ENCODE measurements at regions of chr14 and their contacts with region 1.

Region 1: DNA sequence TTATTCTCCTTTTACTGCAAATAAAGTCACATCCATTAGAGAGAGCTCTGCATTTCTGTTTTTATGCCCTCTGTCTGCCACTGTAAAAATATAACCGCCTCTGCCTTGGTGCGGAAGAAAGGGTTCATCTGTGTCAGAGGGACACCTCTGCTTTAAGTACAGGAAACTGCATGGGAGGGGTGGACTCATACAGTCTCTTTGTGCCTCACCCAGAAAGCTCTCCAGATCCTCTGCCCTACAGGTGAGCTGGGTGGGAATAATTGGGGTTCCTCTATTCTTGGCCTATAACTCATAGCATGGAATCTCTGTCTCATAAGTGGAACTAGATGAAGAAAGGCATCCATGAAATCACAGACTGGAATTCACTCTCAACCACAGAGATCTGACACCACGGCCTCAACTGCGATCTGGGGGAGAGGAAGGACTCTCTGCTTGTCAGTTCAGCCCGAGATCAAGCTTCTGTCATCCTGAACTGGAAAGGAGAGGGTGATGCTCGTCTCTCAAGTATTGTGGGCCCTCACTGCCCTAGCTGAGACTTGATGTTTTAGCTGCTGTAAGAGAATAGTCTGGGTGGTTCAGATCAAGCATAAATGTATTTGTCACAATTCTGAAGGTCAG is 702.3 kb downstream of the TMEM121 start:
- DNase-seq: peak in 9 of 10 donors; percentile 20 to 80 (median 62)
- ATAC-seq: peak; percentile 95 to 96
- H3K4me3 Mint-ChIP-seq: peak overlapping the region; percentile 80 to 97 (median 90)
- H3K27ac Mint-ChIP-seq: peak overlapping the region; percentile 85 to 98 (median 96)
- H3K4me1 Mint-ChIP-seq: peaks cover 23 to 77% (median 62%) of the 10 kb centered on the region in 4 donors
- H3K27me3 Mint-ChIP-seq: no peaks in the 10 kb centered on the region

Region 2: DNA sequence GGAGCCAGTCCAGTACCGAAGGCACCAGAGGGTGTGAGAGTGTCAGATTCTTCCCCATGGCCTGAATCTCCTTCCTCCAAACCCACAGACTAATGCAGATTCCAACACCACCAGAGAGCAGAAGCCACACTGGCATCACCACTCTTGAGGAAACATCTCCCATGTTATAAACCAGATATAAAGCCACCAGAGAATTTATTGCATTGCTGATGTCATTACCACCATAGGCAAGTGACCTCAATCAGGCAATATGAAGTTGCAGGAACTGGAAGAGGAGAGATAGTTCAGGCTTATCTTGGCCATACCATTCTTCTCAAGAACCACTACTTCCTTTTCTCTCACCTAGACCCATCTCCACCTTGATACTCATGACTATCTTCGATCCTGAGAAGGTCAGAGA is 48.9 kb before region 1 on chr14:
- POLR2A ChIA-PET with region 1: no interaction called
- DNase-seq: no peak
- ATAC-seq: no peak
- H3K4me3 Mint-ChIP-seq: no peak overlapping the region
- H3K27ac Mint-ChIP-seq: peak overlapping the region in 4 of 10 donors; percentile 22 to 57 (median 33)
- H3K4me1 Mint-ChIP-seq: peaks cover 4 to 47% (median 41%) of the 10 kb centered on the region in 4 donors
- H3K27me3 Mint-ChIP-seq: peaks cover 0 to 2% (median 0%) of the 10 kb centered on the region in 5 donors

Region 3: GRCh38 chr14:106210652-106211051 is 18.0 kb before region 1 on chr14:
- POLR2A ChIA-PET with region 1: interaction called, 10 read pairs
- DNase-seq: peak in 2 of 10 donors; percentile 32 to 35
- ATAC-seq: peak; percentile 41 to 53
- H3K4me3 Mint-ChIP-seq: no peak overlapping the region
- H3K27ac Mint-ChIP-seq: peak overlapping the region in 3 of 10 donors; percentile 47 to 82 (median 51)
- H3K4me1 Mint-ChIP-seq: peaks cover 7 to 18% (median 13%) of the 10 kb centered on the region in 4 donors
- H3K27me3 Mint-ChIP-seq: peaks cover 0 to 9% (median 6%) of the 10 kb centered on the region in 5 donors

Region 4: GRCh38 chr14:106248321-106249192 is 19.9 kb after region 1 on chr14:
- POLR2A ChIA-PET with region 1: no interaction called
- DNase-seq: no peak
- ATAC-seq: no peak
- H3K4me3 Mint-ChIP-seq: no peak overlapping the region
- H3K27ac Mint-ChIP-seq: no peak overlapping the region
- H3K4me1 Mint-ChIP-seq: peaks cover 0 to 7% (median 3%) of the 10 kb centered on the region in 4 donors
- H3K27me3 Mint-ChIP-seq: peaks cover 7 to 17% (median 14%) of the 10 kb centered on the region in 5 donors

Measured in naive thymus-derived CD8-positive, alpha-beta T cell (primary cell).